Activated CD8-positive, alpha-beta T cell treated with anti-CD3 and anti-CD28 coated beads for 36 hours (primary cell): ENCODE measurements at regions of chr17 and their contacts with region 1.

Region 1: GRCh38 chr17:68205251-68205807 is 42.5 kb upstream of the AMZ2 start:
- DNase-seq: peak; percentile 95
- ATAC-seq: peak; percentile 78
- H3K4me3 Mint-ChIP-seq: peak overlapping the region; percentile 87
- H3K27ac Mint-ChIP-seq: peak overlapping the region; percentile 88
- H3K4me1 Mint-ChIP-seq: peaks cover 24% of the 10 kb centered on the region
- H3K27me3 Mint-ChIP-seq: peaks cover 7% of the 10 kb centered on the region
- CTCF ChIP-seq: peak; percentile 88

Region 2: DNA sequence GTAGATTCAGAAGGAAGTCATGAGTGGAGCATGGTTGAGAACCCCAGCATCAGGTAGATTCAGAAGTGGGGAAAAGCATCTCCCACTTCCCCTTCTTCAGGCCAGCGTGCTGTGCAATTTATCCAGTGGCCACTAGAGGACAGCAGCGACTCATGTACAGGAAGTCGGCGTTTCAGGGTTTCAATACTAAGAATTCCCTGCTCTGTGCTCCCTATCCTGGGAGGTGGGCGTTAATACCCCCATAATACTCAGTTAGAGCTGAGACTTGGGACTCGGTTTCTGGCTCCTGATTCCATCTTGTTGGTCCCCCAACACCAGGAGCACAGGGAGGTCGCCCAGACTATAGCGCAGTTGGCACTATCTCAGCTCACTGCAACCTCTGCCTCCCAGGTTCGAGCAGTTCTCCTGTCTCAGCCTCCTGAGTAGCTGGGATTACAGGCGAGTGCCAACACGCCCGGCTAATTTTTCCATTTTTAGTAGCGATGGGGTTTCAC is 32.8 kb before region 1 on chr17:
- CTCF ChIA-PET with region 1: interaction called, 60 read pairs
- POLR2A ChIA-PET with region 1: interaction called, 7 read pairs
- intact Hi-C with region 1: loop called (anchors 5 kb)
- DNase-seq: peak; percentile 84
- ATAC-seq: peak; percentile 82
- H3K4me3 Mint-ChIP-seq: no peak overlapping the region
- H3K27ac Mint-ChIP-seq: no peak overlapping the region
- H3K4me1 Mint-ChIP-seq: peaks cover 20% of the 10 kb centered on the region
- H3K27me3 Mint-ChIP-seq: peaks cover 3% of the 10 kb centered on the region
- CTCF ChIP-seq: peak; percentile 99

Region 3: GRCh38 chr17:68238164-68238872 is 33.0 kb after region 1 on chr17:
- CTCF ChIA-PET with region 1: interaction called, 11 read pairs
- POLR2A ChIA-PET with region 1: interaction called, 13 read pairs
- intact Hi-C with region 1: no loop called
- DNase-seq: peak; percentile 49
- ATAC-seq: peak; percentile 20
- H3K4me3 Mint-ChIP-seq: peak overlapping the region; percentile 82
- H3K27ac Mint-ChIP-seq: peak overlapping the region; percentile 99
- H3K4me1 Mint-ChIP-seq: peaks cover 52% of the 10 kb centered on the region
- H3K27me3 Mint-ChIP-seq: no peaks in the 10 kb centered on the region
- CTCF ChIP-seq: no peak

Region 4: DNA sequence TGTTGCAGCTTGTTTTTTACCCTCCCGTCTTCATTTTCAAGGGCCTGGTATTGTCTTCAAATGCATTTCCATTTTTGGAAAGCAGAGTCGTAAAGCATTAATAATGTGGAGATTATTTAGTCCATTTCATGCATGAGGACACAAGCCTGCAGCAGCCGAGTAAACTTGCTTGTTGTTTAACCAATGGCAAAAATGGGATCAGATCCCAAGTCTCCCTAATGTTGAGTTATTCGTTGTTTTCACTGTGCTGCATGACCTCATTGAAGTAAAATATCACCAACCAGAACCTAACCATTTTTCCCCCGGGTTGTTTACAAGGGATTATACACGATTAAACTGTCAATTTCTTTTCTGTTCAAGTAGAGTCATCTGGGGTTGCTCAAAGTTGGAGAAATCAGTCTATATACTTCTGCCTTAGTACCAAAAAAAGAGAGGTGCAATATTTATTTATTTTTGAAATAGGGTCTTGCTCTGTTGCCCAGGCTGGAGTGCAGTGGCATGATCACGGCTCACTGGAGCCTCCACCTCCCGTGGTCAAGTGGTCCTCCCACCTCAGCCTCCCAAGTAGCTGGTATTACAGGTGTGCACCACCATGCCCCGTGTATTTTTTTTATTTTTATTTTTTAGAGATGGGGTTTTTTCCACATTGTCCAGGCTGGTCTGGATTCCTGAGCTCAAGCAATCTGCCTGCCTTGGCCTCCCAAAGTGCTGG is 54.9 kb after region 1 on chr17:
- CTCF ChIA-PET with region 1: interaction called, 14 read pairs
- POLR2A ChIA-PET with region 1: interaction called, 3 read pairs
- intact Hi-C with region 1: no loop called
- DNase-seq: no peak
- ATAC-seq: no peak
- H3K4me3 Mint-ChIP-seq: peak overlapping the region; percentile 69
- H3K27ac Mint-ChIP-seq: peak overlapping the region; percentile 93
- H3K4me1 Mint-ChIP-seq: peaks cover 63% of the 10 kb centered on the region
- H3K27me3 Mint-ChIP-seq: no peaks in the 10 kb centered on the region
- CTCF ChIP-seq: no peak

Region 5: GRCh38 chr17:68398691-68399637 is 193.6 kb after region 1 on chr17:
- CTCF ChIA-PET with region 1: no interaction called
- POLR2A ChIA-PET with region 1: no interaction called
- intact Hi-C with region 1: no loop called
- DNase-seq: peak; percentile 64
- ATAC-seq: peak; percentile 57
- H3K4me3 Mint-ChIP-seq: peak overlapping the region; percentile 22
- H3K27ac Mint-ChIP-seq: peak overlapping the region; percentile 93
- H3K4me1 Mint-ChIP-seq: peaks cover 35% of the 10 kb centered on the region
- H3K27me3 Mint-ChIP-seq: no peaks in the 10 kb centered on the region
- CTCF ChIP-seq: peak; percentile 77